ENCODE measurements at regions of chr4 and their contacts with region 1.

Region 1: GRCh38 chr4:143358923-143359643 is 22.4 kb downstream of the GAB1 start:
- DNase-seq: no peak
- ATAC-seq: peak; percentile 23 to 63 (median 41)
- H3K4me3 ChIP-seq: peak overlapping the region in 1 of 10 donors; percentile 4
- H3K27ac ChIP-seq: peak overlapping the region in 8 of 10 donors; percentile 12 to 79 (median 44)
- H3K4me1 ChIP-seq: peaks cover 10 to 100% (median 91%) of the 10 kb centered on the region in 9 donors
- H3K27me3 ChIP-seq: no peaks in the 10 kb centered on the region
- CTCF ChIP-seq: no peak

Region 2: GRCh38 chr4:143389579-143390195 is 30.6 kb after region 1 on chr4:
- intact Hi-C with region 1: loop called in 2 of 10 experiments (anchors 5 kb)
- DNase-seq: no peak
- ATAC-seq: peak in 4 of 8 donors; percentile 29 to 56 (median 40)
- H3K4me3 ChIP-seq: no peak overlapping the region
- H3K27ac ChIP-seq: peak overlapping the region in 7 of 10 donors; percentile 1 to 64 (median 22)
- H3K4me1 ChIP-seq: peaks cover 11 to 98% (median 71%) of the 10 kb centered on the region in 9 donors
- H3K27me3 ChIP-seq: no peaks in the 10 kb centered on the region
- CTCF ChIP-seq: no peak

Region 3: GRCh38 chr4:143406523-143406922 is 47.4 kb after region 1 on chr4:
- intact Hi-C with region 1: loop called in 1 of 10 experiments (anchors 10 kb)
- DNase-seq: peak; percentile 42 to 77
- ATAC-seq: peak; percentile 41 to 86 (median 54)
- H3K4me3 ChIP-seq: no peak overlapping the region
- H3K27ac ChIP-seq: peak overlapping the region in 9 of 10 donors; percentile 24 to 78 (median 53)
- H3K4me1 ChIP-seq: peaks cover 33 to 100% (median 94%) of the 10 kb centered on the region in 9 donors
- H3K27me3 ChIP-seq: no peaks in the 10 kb centered on the region
- CTCF ChIP-seq: no peak

Region 4: GRCh38 chr4:143455211-143455610 is 96.1 kb after region 1 on chr4:
- intact Hi-C with region 1: no loop called
- DNase-seq: no peak
- ATAC-seq: no peak
- H3K4me3 ChIP-seq: no peak overlapping the region
- H3K27ac ChIP-seq: peak overlapping the region in 8 of 10 donors; percentile 17 to 49 (median 24)
- H3K4me1 ChIP-seq: peaks cover 0 to 19% (median 8%) of the 10 kb centered on the region in 9 donors
- H3K27me3 ChIP-seq: no peaks in the 10 kb centered on the region
- CTCF ChIP-seq: no peak

Region 5: GRCh38 chr4:143473334-143474126 is 114.4 kb after region 1 on chr4:
- intact Hi-C with region 1: loop called in 1 of 10 experiments (anchors 10 kb)
- DNase-seq: no peak
- ATAC-seq: no peak
- H3K4me3 ChIP-seq: no peak overlapping the region
- H3K27ac ChIP-seq: no peak overlapping the region
- H3K4me1 ChIP-seq: no peaks in the 10 kb centered on the region
- H3K27me3 ChIP-seq: no peaks in the 10 kb centered on the region
- CTCF ChIP-seq: no peak

Measured in heart right ventricle (tissue), 16 donors.